Heart left ventricle (tissue), 16 donors: ENCODE measurements at regions of chr13 and their contacts with region 1.

Region 1: GRCh38 chr13:20489185-20489820 is 36.4 kb downstream of the CRYL1 start:
- DNase-seq: peak in 2 of 5 donors; percentile 29 to 62
- ATAC-seq: peak; percentile 48 to 77 (median 60)
- H3K4me3 ChIP-seq: no peak overlapping the region
- H3K27ac ChIP-seq: no peak overlapping the region
- H3K4me1 ChIP-seq: peaks cover 0 to 11% (median 0%) of the 10 kb centered on the region in 12 donors
- H3K27me3 ChIP-seq: no peaks in the 10 kb centered on the region
- CTCF ChIP-seq: peak in 7 of 12 donors; percentile 15 to 68 (median 35)
- POLR2A ChIP-seq: no peak

Region 2: GRCh38 chr13:19737844-19738557 is 751.3 kb before region 1 on chr13:
- intact Hi-C with region 1: no loop called
- DNase-seq: no peak
- ATAC-seq: no peak
- H3K4me3 ChIP-seq: no peak overlapping the region
- H3K27ac ChIP-seq: no peak overlapping the region
- H3K4me1 ChIP-seq: peaks cover 0 to 4% (median 0%) of the 10 kb centered on the region in 12 donors
- H3K27me3 ChIP-seq: no peaks in the 10 kb centered on the region
- CTCF ChIP-seq: no peak
- POLR2A ChIP-seq: no peak

Region 3: DNA sequence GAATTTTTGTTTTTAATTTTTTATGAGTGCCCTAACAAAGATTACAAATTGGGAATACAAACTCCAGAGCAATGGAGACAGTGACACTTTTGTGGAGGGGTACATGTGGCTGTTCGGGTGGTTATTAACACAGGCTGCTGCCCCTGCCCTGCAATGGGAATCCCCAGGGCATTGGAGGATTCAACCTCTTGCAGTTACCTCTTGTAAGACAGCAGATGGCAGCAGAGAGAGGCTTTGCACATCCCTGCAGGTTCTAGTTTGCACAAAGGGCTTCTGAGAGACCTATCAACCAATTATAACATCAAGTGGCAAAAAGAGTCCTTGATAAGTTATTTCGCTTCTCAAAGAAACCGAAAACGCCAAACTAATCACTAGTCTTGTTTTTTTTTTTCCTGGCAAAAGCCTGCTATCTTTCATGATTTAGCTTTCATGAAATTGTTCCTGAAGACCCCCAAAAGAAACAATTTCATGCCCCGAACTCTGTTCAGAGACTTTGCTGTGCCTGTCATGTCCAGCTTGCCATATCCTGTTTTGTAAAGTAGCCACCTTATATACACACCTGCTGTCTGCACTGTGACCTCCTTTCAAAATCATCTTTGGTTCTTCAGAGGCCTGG is 307.0 kb before region 1 on chr13:
- intact Hi-C with region 1: loop called in 1 of 10 experiments (anchors 1 kb)
- DNase-seq: peak in 1 of 5 donors; percentile 45
- ATAC-seq: peak; percentile 78 to 82 (median 80)
- H3K4me3 ChIP-seq: no peak overlapping the region
- H3K27ac ChIP-seq: no peak overlapping the region
- H3K4me1 ChIP-seq: peaks cover 0 to 6% (median 0%) of the 10 kb centered on the region in 12 donors
- H3K27me3 ChIP-seq: peaks cover 0 to 30% (median 3%) of the 10 kb centered on the region in 9 donors
- CTCF ChIP-seq: peak; percentile 70 to 88 (median 79)
- POLR2A ChIP-seq: no peak

Region 4: GRCh38 chr13:20192158-20192835 is 297.0 kb before region 1 on chr13:
- intact Hi-C with region 1: loop called in 9 of 10 experiments (anchors 1 to 10 kb)
- DNase-seq: no peak
- ATAC-seq: peak in 1 of 4 donors; percentile 8
- H3K4me3 ChIP-seq: peak overlapping the region; percentile 49 to 72 (median 59)
- H3K27ac ChIP-seq: no peak overlapping the region
- H3K4me1 ChIP-seq: peaks cover 5 to 30% (median 19%) of the 10 kb centered on the region in 12 donors
- H3K27me3 ChIP-seq: peaks cover 22 to 63% (median 30%) of the 10 kb centered on the region in 9 donors
- CTCF ChIP-seq: no peak
- POLR2A ChIP-seq: no peak

Region 5: DNA sequence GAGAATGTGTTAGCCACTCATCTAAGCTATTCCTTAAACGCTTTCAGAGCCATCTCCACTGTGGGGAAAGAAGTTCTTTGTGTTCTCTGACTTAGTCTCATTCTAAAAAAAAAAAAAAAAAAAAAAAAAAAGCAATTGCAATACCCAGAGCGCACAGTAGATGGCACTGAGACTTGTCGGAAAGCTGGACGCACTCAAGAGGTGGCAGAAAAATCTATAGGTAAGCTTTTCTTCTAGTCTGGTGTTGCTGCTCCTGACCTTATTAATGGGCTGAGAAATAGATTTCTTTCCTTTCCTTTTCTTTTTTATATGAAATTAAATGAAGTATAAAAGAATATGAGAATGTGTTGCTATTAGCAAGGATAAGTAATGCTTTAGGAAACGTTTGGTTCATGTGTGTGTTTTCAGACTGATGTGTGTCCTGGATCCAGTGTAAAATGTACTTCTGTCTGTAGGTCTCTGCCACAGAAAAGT is 291.9 kb before region 1 on chr13:
- intact Hi-C with region 1: loop called (anchors 1 to 10 kb)
- DNase-seq: no peak
- ATAC-seq: peak in 2 of 4 donors; percentile 44 to 45
- H3K4me3 ChIP-seq: no peak overlapping the region
- H3K27ac ChIP-seq: no peak overlapping the region
- H3K4me1 ChIP-seq: peaks cover 5 to 22% (median 15%) of the 10 kb centered on the region in 12 donors
- H3K27me3 ChIP-seq: peaks cover 16 to 47% (median 29%) of the 10 kb centered on the region in 9 donors
- CTCF ChIP-seq: peak; percentile 56 to 77 (median 70)
- POLR2A ChIP-seq: no peak